Dorsolateral prefrontal cortex (tissue), 120 donors: ENCODE measurements at regions of chr11 and their contacts with region 1.

Region 1: DNA sequence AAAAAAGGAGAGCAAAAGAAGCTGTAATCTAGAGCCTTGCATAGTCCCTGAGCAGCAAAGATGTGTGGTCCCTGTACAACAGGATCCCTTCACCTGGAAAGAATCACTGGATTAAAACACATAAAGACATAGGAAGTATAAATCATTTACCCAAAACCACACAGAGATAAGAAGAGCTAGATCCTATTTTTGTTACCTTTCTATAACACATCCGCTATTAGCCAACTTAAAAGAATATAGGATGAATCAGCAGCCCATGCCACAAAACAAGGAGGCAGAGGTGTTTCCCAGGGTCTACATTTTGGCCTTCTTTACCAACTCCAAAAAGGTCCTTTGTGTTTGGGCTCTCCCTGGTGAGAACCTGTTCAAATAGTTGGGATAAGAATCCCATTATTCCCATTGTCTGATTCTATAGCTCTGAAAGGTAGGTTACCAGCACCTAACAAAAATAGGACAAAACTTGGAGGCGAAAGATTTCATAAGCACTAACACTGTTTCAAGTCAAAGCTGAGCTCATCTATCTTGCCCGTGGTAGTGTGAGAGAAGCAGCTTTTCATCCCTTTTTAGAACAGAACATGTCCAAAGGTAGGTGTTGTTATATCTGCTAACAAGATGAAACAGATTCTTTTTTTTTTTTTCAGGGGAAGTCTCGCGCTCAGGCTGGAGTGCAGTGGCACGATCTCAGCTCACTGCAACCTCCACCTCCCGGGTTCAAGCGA is 26.8 kb downstream of the PAK1 start:
- DNase-seq: no peak
- H3K4me3 ChIP-seq: no peak overlapping the region
- H3K27ac ChIP-seq: peak overlapping the region in 46 of 59 donors; percentile 8 to 83 (median 58)
- H3K27me3 ChIP-seq: no peaks in the 10 kb centered on the region
- CTCF ChIP-seq: no peak

Region 2: DNA sequence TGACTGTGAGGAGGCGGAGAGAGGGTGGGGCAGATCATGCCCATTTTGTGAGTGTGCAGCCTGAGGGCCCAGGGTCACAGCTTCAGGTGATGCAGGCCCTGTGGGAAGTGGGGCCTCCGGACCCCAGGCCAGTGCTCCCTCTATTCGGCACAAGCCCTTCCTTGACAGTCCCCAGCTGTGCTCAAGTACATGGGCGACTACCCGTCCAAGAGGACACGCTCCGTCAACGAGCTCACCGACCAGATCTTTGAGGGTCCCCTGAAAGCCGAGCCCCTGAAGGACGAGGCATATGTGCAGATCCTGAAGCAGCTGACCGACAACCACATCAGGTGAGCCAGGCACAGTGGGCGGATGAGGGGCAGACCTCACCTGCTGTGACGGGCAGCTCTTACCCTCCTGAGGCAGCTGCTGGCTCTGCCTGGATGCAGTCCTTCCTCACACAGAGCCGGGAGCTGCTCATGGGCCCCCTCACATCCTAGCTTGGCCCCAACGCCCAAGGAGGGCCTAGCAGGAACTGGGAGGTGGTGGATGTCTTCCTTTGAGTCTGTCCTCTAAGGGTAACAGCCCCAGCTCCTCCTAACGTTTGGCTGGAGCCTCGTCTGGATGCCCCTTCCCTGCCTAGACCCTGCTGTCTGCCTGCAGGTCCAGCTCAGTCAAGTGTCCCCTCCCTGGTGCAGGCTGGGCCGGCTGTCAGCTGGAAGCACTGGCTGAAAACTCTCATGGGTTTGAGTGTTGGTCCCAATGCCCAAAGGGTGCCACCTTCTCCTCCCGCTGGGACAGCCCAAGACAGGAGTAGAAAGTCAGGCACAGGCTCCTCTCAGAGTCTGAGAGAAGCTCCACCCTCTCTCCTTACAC is 242.9 kb before region 1 on chr11:
- intact Hi-C with region 1: no loop called
- DNase-seq: peak in 2 of 10 donors; percentile 33 to 41
- H3K4me3 ChIP-seq: no peak overlapping the region
- H3K27ac ChIP-seq: no peak overlapping the region
- H3K27me3 ChIP-seq: no peaks in the 10 kb centered on the region
- CTCF ChIP-seq: no peak

Region 3: DNA sequence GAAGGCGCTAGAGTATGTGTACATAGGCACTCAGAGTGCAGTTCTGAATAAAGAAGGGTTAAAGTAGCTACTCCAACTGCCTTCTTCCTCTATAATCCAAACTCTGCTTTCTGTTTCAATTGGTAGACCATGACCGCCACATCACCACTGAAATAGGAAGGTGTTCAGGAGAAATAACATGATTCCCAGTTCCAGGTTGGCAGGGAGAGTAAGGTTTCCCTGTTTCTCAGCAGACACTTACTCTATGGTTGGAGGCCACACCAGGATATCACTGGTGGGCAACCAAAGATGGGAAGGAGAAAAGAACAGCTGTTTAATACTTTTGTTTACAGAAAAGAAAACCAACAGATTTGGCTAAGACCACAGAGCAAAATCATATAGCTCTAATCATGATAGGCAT is 11.1 kb before region 1 on chr11:
- intact Hi-C with region 1: loop called in 1 of 2 experiments (anchors 1 kb)
- DNase-seq: no peak
- H3K4me3 ChIP-seq: no peak overlapping the region
- H3K27ac ChIP-seq: peak overlapping the region in 28 of 59 donors; percentile 3 to 73 (median 42)
- H3K27me3 ChIP-seq: no peaks in the 10 kb centered on the region
- CTCF ChIP-seq: no peak